CD8-positive, alpha-beta memory T cell (primary cell): ENCODE measurements at regions of chr19 and their contacts with region 1.

Region 1: DNA sequence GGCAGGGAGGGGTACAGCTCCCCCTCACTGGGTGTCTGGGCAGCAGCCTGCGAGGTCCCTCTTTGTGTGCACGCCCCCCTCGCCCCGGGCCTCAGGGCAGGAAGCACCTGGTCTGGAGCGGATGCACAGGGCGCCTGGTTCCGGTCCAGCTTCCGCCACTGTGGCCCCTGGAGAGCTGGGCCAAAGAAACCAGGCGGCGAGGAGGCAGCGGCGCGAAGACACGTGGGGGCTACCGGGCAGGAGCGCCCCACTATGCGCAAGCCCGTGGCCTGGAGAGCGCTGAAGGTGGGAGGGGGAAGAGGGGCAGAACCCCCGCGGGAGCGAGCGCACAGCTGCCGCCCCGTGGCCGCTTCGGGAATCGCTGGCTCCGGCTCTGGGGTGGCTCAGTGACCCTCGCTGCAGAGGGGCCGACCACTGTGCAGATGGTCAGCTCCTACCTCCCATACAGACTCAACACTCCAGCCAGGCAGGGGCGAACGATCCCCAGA is 1.7 kb upstream of the LYL1 start:
- DNase-seq: peak; percentile 49 to 70 (median 58)
- H3K4me3 ChIP-seq: peak overlapping the region; percentile 81
- H3K4me3 Mint-ChIP-seq: peak overlapping the region; percentile 82 to 95 (median 90)
- H3K27ac ChIP-seq: peak overlapping the region; percentile 88
- H3K27ac Mint-ChIP-seq: peak overlapping the region in 7 of 8 donors; percentile 73 to 93 (median 80)
- H3K4me1 ChIP-seq: peaks cover 53% of the 10 kb centered on the region
- H3K4me1 Mint-ChIP-seq: peaks cover 28 to 52% (median 30%) of the 10 kb centered on the region in 3 donors
- H3K27me3 ChIP-seq: no peaks in the 10 kb centered on the region
- H3K27me3 Mint-ChIP-seq: peaks cover 0 to 6% of the 10 kb centered on the region in 2 donors

Region 2: DNA sequence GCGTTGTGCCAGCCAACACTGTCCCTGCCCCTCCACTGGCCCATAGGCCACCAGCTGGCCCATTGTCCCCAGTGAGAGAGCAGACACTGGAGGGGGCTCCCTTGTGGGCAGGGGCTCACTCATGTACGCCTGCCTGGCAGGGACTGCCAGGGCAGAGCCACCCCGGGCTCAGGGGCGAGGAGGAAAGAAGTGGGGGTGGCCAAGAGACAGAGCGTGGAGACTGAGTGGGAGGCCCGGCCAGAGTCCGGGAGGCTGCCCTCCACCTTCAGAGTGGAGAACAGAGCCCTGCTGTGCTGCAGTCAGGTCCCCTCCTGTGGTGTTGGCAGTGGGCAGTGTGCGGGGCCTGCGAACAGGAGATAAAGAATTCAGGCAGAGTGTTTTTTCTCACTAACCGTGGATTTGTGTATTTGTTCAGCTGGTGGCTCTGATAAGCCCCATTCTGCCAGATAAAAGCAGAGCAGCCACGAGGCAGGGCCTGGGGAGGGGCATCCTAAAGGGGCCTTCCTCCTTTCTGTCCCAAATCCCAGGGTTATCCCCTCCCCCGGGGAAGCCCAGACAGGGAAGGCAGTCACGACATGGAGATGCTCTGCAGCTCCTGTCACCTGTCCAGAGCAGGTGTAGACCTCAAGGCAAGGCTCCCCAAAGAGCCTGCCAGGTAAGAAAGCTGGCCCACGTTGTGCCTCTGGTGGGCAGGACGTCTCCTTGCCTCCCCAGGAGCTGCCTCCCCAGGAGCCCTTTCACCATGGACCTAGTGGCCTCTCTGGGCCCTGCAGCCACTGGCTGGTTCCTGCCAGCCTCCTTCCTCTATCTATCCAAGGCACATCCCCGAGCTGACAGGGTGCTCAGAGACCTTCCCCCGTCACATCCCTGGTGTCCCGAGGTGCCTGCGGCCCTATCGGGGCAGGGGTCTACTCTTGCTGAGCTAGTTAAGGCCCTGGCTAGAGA is 34.7 kb before region 1 on chr19:
- CTCF ChIA-PET with region 1: no interaction called
- POLR2A ChIA-PET with region 1: no interaction called
- DNase-seq: no peak
- H3K4me3 ChIP-seq: no peak overlapping the region
- H3K4me3 Mint-ChIP-seq: no peak overlapping the region
- H3K27ac ChIP-seq: peak overlapping the region; percentile 69
- H3K27ac Mint-ChIP-seq: no peak overlapping the region
- H3K4me1 ChIP-seq: no peaks in the 10 kb centered on the region
- H3K4me1 Mint-ChIP-seq: no peaks in the 10 kb centered on the region
- H3K27me3 ChIP-seq: no peaks in the 10 kb centered on the region
- H3K27me3 Mint-ChIP-seq: peaks cover 5 to 6% of the 10 kb centered on the region in 2 donors

Region 3: DNA sequence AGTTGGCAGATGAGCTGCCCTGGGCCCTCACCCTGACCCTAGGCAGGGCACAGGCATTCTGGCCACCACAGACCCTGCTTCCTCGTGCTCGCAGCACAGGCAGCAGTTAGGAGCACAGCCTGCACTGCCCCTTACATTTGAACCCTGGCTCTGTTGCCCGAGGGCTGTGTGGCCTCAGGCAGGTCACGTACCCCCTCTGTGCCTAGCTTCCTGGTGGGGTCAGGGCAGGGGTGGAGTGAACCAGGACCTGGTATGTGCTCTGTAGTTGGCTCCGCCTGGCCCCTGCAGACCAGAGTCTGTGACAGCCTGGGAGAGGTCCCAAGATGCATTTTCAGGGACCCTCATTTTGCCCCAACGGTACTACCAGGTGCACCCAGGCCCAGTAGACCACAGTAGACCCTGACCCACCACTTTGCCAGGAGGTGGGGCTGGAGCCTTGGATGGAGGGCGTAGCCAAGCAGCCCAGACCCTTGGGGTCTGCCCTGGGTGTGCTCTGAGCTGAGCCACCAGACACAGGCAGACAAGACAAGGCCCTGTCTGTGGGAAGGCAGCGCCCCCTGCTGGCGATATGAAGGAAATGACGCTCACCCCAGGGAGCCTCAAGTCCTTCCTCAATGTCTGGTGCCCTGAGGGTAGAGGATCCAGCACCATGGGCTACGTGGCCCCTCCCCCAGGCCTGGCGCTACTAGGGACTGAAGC is 10.8 kb before region 1 on chr19:
- CTCF ChIA-PET with region 1: interaction called, 12 read pairs
- POLR2A ChIA-PET with region 1: interaction called, 7 read pairs
- DNase-seq: peak; percentile 66 to 86 (median 72)
- H3K4me3 ChIP-seq: no peak overlapping the region
- H3K4me3 Mint-ChIP-seq: no peak overlapping the region
- H3K27ac ChIP-seq: no peak overlapping the region
- H3K27ac Mint-ChIP-seq: peak overlapping the region in 1 of 8 donors; percentile 6
- H3K4me1 ChIP-seq: peaks cover 29% of the 10 kb centered on the region
- H3K4me1 Mint-ChIP-seq: peaks cover 15 to 34% (median 16%) of the 10 kb centered on the region in 3 donors
- H3K27me3 ChIP-seq: peaks cover 17% of the 10 kb centered on the region
- H3K27me3 Mint-ChIP-seq: peaks cover 19 to 27% of the 10 kb centered on the region in 2 donors

Region 4: DNA sequence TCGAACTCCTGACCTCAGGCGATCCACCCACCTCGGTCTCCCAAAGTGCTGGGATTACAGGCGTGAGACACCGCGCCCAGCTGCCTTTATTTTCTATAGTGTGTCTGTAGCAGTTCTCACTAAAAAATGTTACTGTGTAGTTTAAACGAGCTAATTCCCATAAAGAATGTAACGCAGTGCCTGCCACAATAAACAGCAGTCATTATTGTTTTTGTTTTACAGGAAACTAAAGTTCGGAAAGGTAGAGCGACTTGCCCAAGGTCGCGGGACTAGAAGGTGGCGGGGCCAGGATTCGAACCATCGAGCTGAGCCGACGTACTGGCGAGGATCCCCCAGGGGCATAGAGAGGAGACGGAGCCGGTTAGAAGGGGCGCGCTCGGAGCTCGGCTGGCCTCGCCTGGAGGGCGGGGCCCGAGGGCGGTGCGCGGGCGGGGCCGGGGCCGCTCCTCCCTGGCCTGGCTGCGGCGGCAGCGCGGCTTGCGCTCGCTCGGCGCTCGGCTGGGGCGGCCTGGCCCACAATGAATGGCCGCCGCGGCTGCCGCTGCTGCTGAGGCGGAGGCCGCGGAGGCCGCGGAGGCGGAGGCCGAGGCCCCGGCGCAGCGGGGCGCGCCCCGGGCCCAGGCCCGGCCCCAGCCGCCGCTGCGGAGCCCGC is 13.5 kb after region 1 on chr19 and contains the start of gene NACC1:
- CTCF ChIA-PET with region 1: interaction called, 22 read pairs
- POLR2A ChIA-PET with region 1: interaction called, 10 read pairs
- DNase-seq: peak; percentile 81 to 89 (median 87)
- H3K4me3 ChIP-seq: peak within 1 kb of the TSS; percentile 81
- H3K4me3 Mint-ChIP-seq: peak within 1 kb of the TSS; percentile 90 to 98 (median 92)
- H3K27ac ChIP-seq: peak within 1 kb of the TSS; percentile 68
- H3K27ac Mint-ChIP-seq: peak within 1 kb of the TSS; percentile 78 to 97 (median 95)
- H3K4me1 ChIP-seq: peaks cover 36% of the 10 kb centered on the region
- H3K4me1 Mint-ChIP-seq: peaks cover 55 to 66% (median 64%) of the 10 kb centered on the region in 3 donors
- H3K27me3 ChIP-seq: no peaks in the 10 kb centered on the region
- H3K27me3 Mint-ChIP-seq: peaks cover 0 to 5% of the 10 kb centered on the region in 2 donors
- total RNA-seq, gene NACC1: 89.9 to 111 TPM

Region 5: GRCh38 chr19:13492128-13492527 is 387.7 kb after region 1 on chr19:
- CTCF ChIA-PET with region 1: no interaction called
- POLR2A ChIA-PET with region 1: no interaction called
- DNase-seq: no peak
- H3K4me3 ChIP-seq: no peak overlapping the region
- H3K4me3 Mint-ChIP-seq: no peak overlapping the region
- H3K27ac ChIP-seq: no peak overlapping the region
- H3K27ac Mint-ChIP-seq: no peak overlapping the region
- H3K4me1 ChIP-seq: no peaks in the 10 kb centered on the region
- H3K4me1 Mint-ChIP-seq: no peaks in the 10 kb centered on the region
- H3K27me3 ChIP-seq: no peaks in the 10 kb centered on the region
- H3K27me3 Mint-ChIP-seq: peaks cover 32 to 57% of the 10 kb centered on the region in 2 donors